H1 (cell line): ENCODE measurements at regions of chr7 and their contacts with region 1.

Region 1: DNA sequence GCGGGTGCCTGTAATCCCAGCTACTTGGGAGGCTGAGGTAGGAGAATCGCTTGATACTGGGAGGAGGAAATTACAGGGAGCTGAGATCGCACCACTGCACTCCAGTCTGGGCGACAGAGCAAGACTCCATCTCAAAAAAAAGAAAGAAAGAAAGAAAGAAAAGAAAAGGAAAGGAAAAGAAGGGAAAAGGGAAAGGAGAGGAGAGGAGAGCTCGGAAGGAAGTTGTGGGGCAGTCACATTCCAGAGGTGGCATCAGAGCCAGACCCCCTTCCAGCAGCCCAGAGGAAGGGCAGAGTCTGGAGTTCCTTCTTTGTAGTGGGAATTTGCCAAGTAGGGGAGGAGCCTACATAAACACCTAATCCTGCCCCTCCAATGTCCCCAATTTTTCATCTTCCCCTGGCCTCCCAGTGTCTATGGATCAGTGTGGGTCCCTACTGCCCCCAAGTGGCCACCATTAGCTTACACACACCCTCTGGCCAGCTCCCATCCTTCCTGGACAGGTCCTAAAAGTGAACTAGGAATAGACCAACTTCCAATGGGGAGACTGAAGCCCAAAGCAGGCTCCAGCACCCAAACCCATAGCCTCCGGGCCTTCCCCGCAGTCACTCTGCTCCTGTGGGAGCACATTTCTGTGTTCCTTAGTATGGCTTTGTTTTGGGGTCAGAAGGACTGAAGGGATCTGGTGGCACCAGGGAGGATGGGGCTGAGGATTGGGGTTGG is 39.6 kb upstream of the HSPB1 start:
- DNase-seq: peak; percentile 69 to 83
- H3K4me3 ChIP-seq: no peak overlapping the region
- H3K27ac ChIP-seq: no peak overlapping the region
- H3K4me1 ChIP-seq: peaks cover 3 to 32% (median 22%) of the 10 kb centered on the region in 4 experiments
- H3K27me3 ChIP-seq: peaks cover 0 to 5% (median 2%) of the 10 kb centered on the region in 4 experiments; a peak in 3 of 7 replicates
- CTCF ChIP-seq: peak in 2 of 3 experiments; percentile 92 to 95; a peak in 3 of 4 replicates
- EP300 ChIP-seq: no peak
- POLR2A ChIP-seq: no peak
- RAD21 ChIP-seq: peak; percentile 96 to 98

Region 2: GRCh38 chr7:75842836-75843446 is 419.9 kb before region 1 on chr7:
- CTCF ChIA-PET with region 1: no interaction called
- POLR2A ChIA-PET with region 1: no interaction called
- DNase-seq: no peak
- H3K4me3 ChIP-seq: no peak overlapping the region
- H3K27ac ChIP-seq: no peak overlapping the region
- H3K4me1 ChIP-seq: no peaks in the 10 kb centered on the region
- H3K27me3 ChIP-seq: no peaks in the 10 kb centered on the region
- CTCF ChIP-seq: no peak
- EP300 ChIP-seq: no peak
- POLR2A ChIP-seq: no peak; a peak in 1 of 3 replicates
- RAD21 ChIP-seq: no peak

Region 3: DNA sequence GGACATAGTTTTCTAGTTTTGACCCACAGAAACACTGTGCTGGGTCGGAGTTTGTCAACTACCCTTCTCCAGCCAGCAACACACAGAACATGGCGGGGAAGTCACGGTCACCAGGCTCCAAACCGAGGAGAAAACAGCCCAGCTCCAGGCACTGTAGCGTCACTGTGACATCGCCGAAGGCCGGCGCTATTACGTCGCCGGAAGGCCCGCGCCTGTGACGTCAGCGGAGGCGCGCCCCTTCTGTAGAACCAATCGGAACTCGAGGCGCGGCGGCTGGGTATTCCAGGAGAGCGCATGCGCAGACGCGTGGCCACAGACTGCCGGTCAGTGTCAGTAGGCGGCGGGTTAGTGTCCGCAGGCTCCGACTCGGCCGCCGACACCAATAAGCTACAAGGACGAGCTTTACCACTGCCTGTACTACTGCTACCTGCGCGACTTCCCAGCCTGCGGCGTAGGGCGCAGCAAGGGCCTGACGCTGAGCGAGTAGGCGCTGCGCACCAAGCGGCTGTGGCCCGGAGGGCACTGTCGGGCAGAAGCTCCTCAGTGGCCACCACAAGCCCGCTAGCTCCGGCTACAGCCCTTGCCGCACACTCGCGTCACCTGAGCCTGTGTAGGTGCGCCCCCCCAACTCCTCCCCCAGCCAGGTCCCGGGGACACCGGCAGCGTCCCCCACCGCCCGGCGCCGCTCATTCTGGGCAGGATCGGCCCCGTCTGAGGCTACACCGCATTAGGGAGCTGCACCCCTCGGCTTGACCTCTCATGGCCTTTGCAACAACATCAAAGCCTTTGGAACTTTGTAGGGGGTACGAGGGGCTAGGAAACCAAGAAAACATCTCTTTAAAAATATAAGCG is 96.2 kb before region 1 on chr7:
- CTCF ChIA-PET with region 1: interaction called, 125 read pairs
- POLR2A ChIA-PET with region 1: interaction called, 3 read pairs
- DNase-seq: peak; percentile 87 to 99
- H3K4me3 ChIP-seq: peak overlapping the region; percentile 54 to 69 (median 56)
- H3K27ac ChIP-seq: peak overlapping the region; percentile 87
- H3K4me1 ChIP-seq: peaks cover 2 to 17% (median 9%) of the 10 kb centered on the region in 4 experiments
- H3K27me3 ChIP-seq: no peaks in the 10 kb centered on the region
- CTCF ChIP-seq: no peak
- EP300 ChIP-seq: peak in 1 of 2 experiments; percentile 68; a peak in 1 of 3 replicates
- POLR2A ChIP-seq: peak; percentile 49 to 86
- RAD21 ChIP-seq: peak in 1 of 2 experiments; percentile 14; a peak in 2 of 4 replicates

Region 4: DNA sequence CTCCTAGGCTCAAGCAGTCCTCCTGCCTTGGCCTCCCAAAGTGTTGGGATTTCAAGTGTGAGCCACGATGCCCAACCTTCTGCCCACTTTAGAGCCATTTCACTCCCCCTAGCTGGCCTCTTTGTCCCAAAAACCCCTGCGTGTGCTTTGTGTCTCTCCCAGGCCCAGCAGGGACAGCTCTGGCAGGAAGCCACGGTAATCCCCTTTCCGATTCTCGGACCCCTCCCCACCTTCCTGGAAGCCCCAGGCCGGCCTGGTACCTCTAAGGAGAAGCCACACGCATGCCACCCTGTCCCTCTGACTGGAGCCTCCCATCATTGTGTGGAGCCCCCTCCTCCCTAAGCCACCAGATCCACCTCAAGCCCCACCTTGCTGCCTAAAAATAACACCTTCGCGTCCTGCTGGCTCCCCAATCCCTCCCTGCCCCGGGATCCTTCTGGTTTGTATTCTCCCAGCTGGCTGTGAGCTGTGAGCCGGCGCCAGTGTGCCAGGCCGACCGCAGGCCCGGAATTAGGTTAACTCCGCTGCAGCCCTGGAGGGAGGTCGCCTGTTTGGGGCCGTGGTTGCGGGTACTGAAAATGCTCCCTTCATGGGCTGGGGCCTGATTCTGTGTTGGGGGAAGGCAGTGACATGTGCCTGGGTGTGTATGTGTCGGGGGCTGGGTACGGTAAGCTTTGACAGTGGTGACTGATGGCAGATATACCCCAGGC is 77.5 kb before region 1 on chr7:
- CTCF ChIA-PET with region 1: interaction called, 25 read pairs
- POLR2A ChIA-PET with region 1: no interaction called
- DNase-seq: peak in 1 of 2 experiments; percentile 75
- H3K4me3 ChIP-seq: no peak overlapping the region; a peak in 1 of 8 replicates
- H3K27ac ChIP-seq: peak overlapping the region; percentile 56; the same call in 1 of the 2 replicates
- H3K4me1 ChIP-seq: peaks cover 0 to 11% (median 8%) of the 10 kb centered on the region in 4 experiments; a peak in 6 of 7 replicates
- H3K27me3 ChIP-seq: no peaks in the 10 kb centered on the region
- CTCF ChIP-seq: no peak
- EP300 ChIP-seq: no peak
- POLR2A ChIP-seq: no peak; a peak in 1 of 3 replicates
- RAD21 ChIP-seq: no peak

Region 5: GRCh38 chr7:76201730-76202665 is 60.8 kb before region 1 on chr7 and contains the start of gene SRRM3:
- CTCF ChIA-PET with region 1: interaction called, 48 read pairs
- POLR2A ChIA-PET with region 1: interaction called, 3 read pairs
- DNase-seq: peak in 1 of 2 experiments; percentile 98
- H3K4me3 ChIP-seq: peak within 1 kb of the TSS; percentile 26 to 71 (median 46)
- H3K27ac ChIP-seq: no peak within 1 kb of the TSS
- H3K4me1 ChIP-seq: peaks cover 0 to 8% (median 6%) of the 10 kb centered on the region in 4 experiments; a peak in 5 of 7 replicates
- H3K27me3 ChIP-seq: 0 out of 7 replicates have a peak, but pooled peaks cover 0 to 2% (median 0%) of the 10 kb centered on the region in 4 experiments
- CTCF ChIP-seq: peak; percentile 80 to 89 (median 87)
- EP300 ChIP-seq: peak in 1 of 2 experiments; percentile 83; a peak in 1 of 3 replicates
- POLR2A ChIP-seq: no peak
- RAD21 ChIP-seq: peak; percentile 25 to 57; a peak in 3 of 4 replicates
- total RNA-seq, gene SRRM3: 16.0 and 17.4 TPM in 2 replicates

Region 6: DNA sequence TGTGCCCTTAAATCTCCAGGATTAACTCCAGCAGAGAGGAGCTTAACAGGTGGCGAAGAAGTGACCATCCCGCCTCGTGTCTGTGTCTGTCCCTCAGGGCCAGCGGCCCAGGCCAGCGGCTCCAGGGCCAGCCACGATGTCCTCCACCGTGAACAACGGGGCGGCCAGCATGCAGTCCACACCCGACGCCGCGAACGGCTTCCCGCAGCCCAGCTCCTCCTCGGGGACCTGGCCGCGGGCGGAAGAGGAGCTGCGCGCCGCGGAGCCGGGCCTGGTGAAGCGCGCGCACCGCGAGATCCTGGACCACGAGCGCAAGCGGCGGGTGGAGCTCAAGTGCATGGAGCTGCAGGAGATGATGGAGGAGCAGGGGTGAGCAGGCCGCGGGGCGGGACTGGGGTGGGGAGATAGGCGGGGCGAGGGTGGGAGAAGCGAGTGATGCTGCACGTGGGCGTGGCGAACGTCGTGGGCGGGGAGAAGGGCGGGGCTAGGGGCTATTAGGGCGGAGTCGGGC is 27.9 kb before region 1 on chr7:
- CTCF ChIA-PET with region 1: interaction called, 43 read pairs
- POLR2A ChIA-PET with region 1: interaction called, 15 read pairs
- DNase-seq: peak; percentile 79 to 99
- H3K4me3 ChIP-seq: peak overlapping the region; percentile 38 to 67 (median 47)
- H3K27ac ChIP-seq: peak overlapping the region; percentile 37; the same call in 1 of the 2 replicates
- H3K4me1 ChIP-seq: peaks cover 6 to 41% (median 27%) of the 10 kb centered on the region in 4 experiments
- H3K27me3 ChIP-seq: no peaks in the 10 kb centered on the region; a peak in 1 of 7 replicates
- CTCF ChIP-seq: peak in 1 of 3 experiments; percentile 11; a peak in 1 of 4 replicates
- EP300 ChIP-seq: no peak
- POLR2A ChIP-seq: 0 out of 3 replicates have a peak, but pooled peaks of 1 of the 2 experiments have one; percentile 20
- RAD21 ChIP-seq: no peak

Region 7: GRCh38 chr7:76282344-76283253 is 19.8 kb after region 1 on chr7:
- CTCF ChIA-PET with region 1: interaction called, 12 read pairs
- POLR2A ChIA-PET with region 1: interaction called, 10 read pairs
- DNase-seq: peak in 1 of 2 experiments; percentile 84
- H3K4me3 ChIP-seq: peak overlapping the region; percentile 49 to 95 (median 58)
- H3K27ac ChIP-seq: no peak overlapping the region
- H3K4me1 ChIP-seq: peaks cover 0 to 13% (median 7%) of the 10 kb centered on the region in 4 experiments; a peak in 5 of 7 replicates
- H3K27me3 ChIP-seq: peaks cover 8 to 31% (median 17%) of the 10 kb centered on the region in 4 experiments
- CTCF ChIP-seq: no peak
- EP300 ChIP-seq: no peak
- POLR2A ChIP-seq: no peak
- RAD21 ChIP-seq: no peak